H1 (cell line): ENCODE measurements at regions of chr1 and their contacts with region 1.

Region 1: GRCh38 chr1:29332204-29332603 is 95.9 kb downstream of the PTPRU start:
- DNase-seq: peak; percentile 49 to 86
- H3K4me3 ChIP-seq: no peak overlapping the region
- H3K27ac ChIP-seq: no peak overlapping the region
- H3K4me1 ChIP-seq: 0 out of 7 replicates have a peak, but pooled peaks cover 0 to 2% (median 0%) of the 10 kb centered on the region in 4 experiments
- H3K27me3 ChIP-seq: no peaks in the 10 kb centered on the region
- CTCF ChIP-seq: peak; percentile 74 to 95 (median 86)
- EP300 ChIP-seq: no peak
- POLR2A ChIP-seq: no peak
- RAD21 ChIP-seq: peak; percentile 89 to 92

Region 2: DNA sequence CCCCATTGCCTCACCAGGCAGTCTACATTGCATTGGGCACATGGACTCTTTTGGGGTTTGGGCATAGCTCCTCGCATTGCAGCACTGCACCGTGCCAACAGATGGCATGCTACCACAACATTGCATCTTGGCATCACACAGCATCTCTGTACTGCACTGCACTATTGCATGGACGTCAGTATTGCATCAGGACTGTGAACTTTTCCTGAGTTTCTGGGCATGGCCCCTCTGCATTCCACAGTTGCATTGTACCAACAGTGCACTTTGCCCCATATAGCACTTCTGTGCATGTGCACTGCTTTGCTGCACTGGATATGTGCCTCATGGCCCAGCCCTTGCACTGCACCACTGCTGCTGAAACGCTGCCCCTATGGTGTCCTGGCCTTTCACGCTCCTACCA is 86.3 kb before region 1 on chr1:
- CTCF ChIA-PET with region 1: interaction called, 113 read pairs
- POLR2A ChIA-PET with region 1: interaction called, 3 read pairs
- DNase-seq: no peak
- H3K4me3 ChIP-seq: no peak overlapping the region
- H3K27ac ChIP-seq: no peak overlapping the region
- H3K4me1 ChIP-seq: peaks cover 13 to 26% (median 20%) of the 10 kb centered on the region in 4 experiments
- H3K27me3 ChIP-seq: no peaks in the 10 kb centered on the region
- CTCF ChIP-seq: peak in 2 of 3 experiments; percentile 62 to 78; a peak in 3 of 4 replicates
- EP300 ChIP-seq: no peak
- POLR2A ChIP-seq: no peak
- RAD21 ChIP-seq: peak; percentile 79 to 82

Region 3: GRCh38 chr1:29349871-29350491 is 17.8 kb after region 1 on chr1:
- CTCF ChIA-PET with region 1: interaction called, 91 read pairs
- POLR2A ChIA-PET with region 1: interaction called, 3 read pairs
- DNase-seq: no peak
- H3K4me3 ChIP-seq: no peak overlapping the region
- H3K27ac ChIP-seq: no peak overlapping the region
- H3K4me1 ChIP-seq: no peaks in the 10 kb centered on the region
- H3K27me3 ChIP-seq: no peaks in the 10 kb centered on the region; a peak in 1 of 7 replicates
- CTCF ChIP-seq: no peak
- EP300 ChIP-seq: no peak
- POLR2A ChIP-seq: no peak
- RAD21 ChIP-seq: no peak

Region 4: DNA sequence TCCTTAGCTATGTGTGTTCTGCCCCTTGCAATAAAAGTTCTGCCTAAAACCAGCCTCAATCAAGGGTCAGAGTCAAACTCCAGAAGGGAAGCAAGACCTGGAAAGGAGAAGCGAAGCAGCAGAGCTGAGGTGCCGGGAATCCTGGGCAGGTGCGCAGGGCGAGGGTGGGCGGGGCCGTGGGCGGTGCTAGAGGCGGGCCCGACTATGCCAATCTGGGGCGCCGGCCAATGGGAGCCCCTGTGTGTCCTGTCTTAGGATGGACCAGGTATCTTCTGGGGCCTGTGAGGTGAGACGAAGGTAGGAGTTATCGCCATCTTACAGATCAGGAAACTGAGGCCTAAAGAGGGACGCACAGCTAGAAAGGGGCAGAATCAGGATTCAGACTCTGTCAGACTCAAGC is 24.5 kb after region 1 on chr1:
- CTCF ChIA-PET with region 1: interaction called, 11 read pairs
- POLR2A ChIA-PET with region 1: interaction called, 3 read pairs
- DNase-seq: peak in 1 of 2 experiments; percentile 72
- H3K4me3 ChIP-seq: no peak overlapping the region
- H3K27ac ChIP-seq: no peak overlapping the region
- H3K4me1 ChIP-seq: peaks cover 0 to 3% (median 1%) of the 10 kb centered on the region in 4 experiments; a peak in 2 of 7 replicates
- H3K27me3 ChIP-seq: no peaks in the 10 kb centered on the region
- CTCF ChIP-seq: no peak
- EP300 ChIP-seq: no peak
- POLR2A ChIP-seq: no peak
- RAD21 ChIP-seq: no peak

Region 5: DNA sequence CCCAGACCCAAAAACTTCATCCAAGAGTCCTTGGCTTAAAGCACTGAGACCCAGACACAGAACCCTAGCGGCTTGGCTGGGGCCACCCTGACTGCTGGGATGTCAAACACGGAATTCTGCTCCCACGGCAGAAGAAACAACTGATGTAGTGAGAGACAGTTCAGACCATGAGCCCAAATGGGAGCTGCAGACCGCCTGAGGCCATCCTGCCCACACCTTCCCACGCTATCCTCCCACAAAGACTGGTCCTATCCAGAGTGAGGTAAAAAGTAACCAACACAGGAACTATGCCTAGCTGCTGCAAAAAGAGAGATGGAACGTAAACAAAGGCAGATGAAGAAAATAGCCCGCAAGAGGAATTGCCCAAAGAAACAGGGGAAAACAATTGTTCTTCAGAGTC is 107.4 kb after region 1 on chr1:
- CTCF ChIA-PET with region 1: interaction called, 10 read pairs
- POLR2A ChIA-PET with region 1: no interaction called
- DNase-seq: no peak
- H3K4me3 ChIP-seq: no peak overlapping the region
- H3K27ac ChIP-seq: no peak overlapping the region
- H3K4me1 ChIP-seq: peaks cover 3 to 14% (median 9%) of the 10 kb centered on the region in 4 experiments
- H3K27me3 ChIP-seq: no peaks in the 10 kb centered on the region
- CTCF ChIP-seq: no peak
- EP300 ChIP-seq: no peak
- POLR2A ChIP-seq: no peak
- RAD21 ChIP-seq: no peak

Region 6: GRCh38 chr1:29453502-29454240 is 121.5 kb after region 1 on chr1:
- CTCF ChIA-PET with region 1: interaction called, 10 read pairs
- POLR2A ChIA-PET with region 1: no interaction called
- DNase-seq: peak; percentile 43 to 62
- H3K4me3 ChIP-seq: no peak overlapping the region
- H3K27ac ChIP-seq: no peak overlapping the region
- H3K4me1 ChIP-seq: peaks cover 0 to 11% (median 5%) of the 10 kb centered on the region in 4 experiments; a peak in 6 of 7 replicates
- H3K27me3 ChIP-seq: no peaks in the 10 kb centered on the region
- CTCF ChIP-seq: peak; percentile 5 to 66 (median 42)
- EP300 ChIP-seq: no peak
- POLR2A ChIP-seq: no peak
- RAD21 ChIP-seq: peak; percentile 30 to 43; a peak in 3 of 4 replicates

Region 7: DNA sequence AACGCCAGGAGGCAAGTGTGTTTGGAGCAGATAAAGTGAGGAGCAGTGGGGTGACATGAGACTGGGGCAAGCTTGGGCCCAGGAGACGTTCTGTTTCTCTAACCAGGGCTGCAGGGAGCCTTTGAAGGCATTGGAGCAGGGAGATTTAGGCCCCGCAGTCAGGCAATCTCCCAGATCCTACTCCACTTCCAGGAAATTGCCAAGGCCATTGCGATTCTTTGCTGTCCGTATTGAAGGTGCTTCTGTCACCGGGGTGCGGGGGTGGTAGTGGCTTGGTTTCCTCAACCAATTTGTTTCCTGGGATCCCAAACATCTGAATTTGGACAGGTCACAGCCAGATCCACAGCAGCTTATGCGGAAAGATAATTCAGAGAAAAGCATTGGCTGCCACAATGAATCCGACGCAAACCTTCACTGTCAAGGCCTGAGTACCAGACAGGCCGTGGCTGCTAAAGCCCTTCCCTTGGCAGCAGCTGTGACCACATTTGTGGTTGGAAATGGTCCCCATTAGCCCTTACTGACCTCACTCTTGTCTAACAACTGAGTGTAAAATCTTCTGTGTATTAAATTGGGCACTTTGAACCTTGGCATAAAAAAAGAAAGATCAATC is 289.7 kb after region 1 on chr1:
- CTCF ChIA-PET with region 1: no interaction called
- POLR2A ChIA-PET with region 1: no interaction called
- DNase-seq: no peak
- H3K4me3 ChIP-seq: no peak overlapping the region
- H3K27ac ChIP-seq: no peak overlapping the region
- H3K4me1 ChIP-seq: no peaks in the 10 kb centered on the region
- H3K27me3 ChIP-seq: no peaks in the 10 kb centered on the region
- CTCF ChIP-seq: no peak
- EP300 ChIP-seq: no peak
- POLR2A ChIP-seq: no peak
- RAD21 ChIP-seq: no peak